ENCODE measurements at regions of chr16 and their contacts with region 1.

Region 1: DNA sequence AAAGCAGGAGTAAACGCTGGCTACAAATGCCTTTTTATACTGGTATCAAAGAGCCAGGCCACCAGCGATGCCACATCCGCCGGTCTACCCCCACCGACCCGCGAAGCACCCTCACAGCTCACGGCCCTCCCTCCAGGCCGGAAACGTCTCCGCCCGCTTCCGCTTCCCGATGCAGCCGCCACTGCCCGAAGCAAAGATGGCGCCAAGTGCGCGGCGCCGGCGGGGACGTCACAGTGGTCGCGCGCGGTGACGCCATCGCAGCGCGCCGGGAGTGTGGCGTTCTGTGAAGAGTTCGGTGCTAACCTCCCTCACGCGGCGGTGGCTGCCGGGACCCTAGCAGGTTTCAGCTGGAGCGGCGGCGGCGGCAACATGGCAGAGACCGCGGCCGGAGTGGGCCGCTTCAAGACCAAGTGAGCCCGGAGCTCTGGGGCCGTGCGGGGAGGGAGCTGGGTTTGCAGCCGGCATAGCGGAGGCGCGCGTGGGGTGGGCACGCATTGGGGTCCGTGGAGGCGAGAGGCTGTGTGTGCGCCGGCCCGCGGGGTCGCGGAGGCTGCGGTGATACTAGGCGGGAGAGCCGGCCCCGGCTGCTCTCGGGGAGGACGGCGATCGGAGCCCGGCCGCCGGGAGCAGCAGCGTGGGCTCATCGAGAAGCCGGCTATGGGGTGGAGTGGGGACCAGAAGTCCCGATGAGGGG is at the start of gene TBL3:
- DNase-seq: peak; percentile 82 to 99
- H3K4me3 ChIP-seq: peak within 1 kb of the TSS; percentile 83 to 93 (median 89)
- H3K27ac ChIP-seq: peak within 1 kb of the TSS; percentile 44; the same call in 1 of the 2 replicates
- H3K4me1 ChIP-seq: peaks cover 0 to 6% (median 5%) of the 10 kb centered on the region in 4 experiments; a peak in 5 of 7 replicates
- H3K27me3 ChIP-seq: no peaks in the 10 kb centered on the region
- CTCF ChIP-seq: 0 out of 4 replicates have a peak, but pooled peaks of 1 of the 3 experiments have one; percentile 14
- EP300 ChIP-seq: peak in 1 of 2 experiments; percentile 38; a peak in 1 of 3 replicates
- POLR2A ChIP-seq: peak in 1 of 2 experiments; percentile 54; a peak in 1 of 3 replicates
- RAD21 ChIP-seq: no peak; a peak in 1 of 4 replicates
- total RNA-seq, gene TBL3: 65.8 and 66.8 TPM in 2 replicates

Region 2: GRCh38 chr16:1959269-1960049 is 12.5 kb before region 1 on chr16 and contains the start of gene NDUFB10:
- CTCF ChIA-PET with region 1: interaction called, 8 read pairs
- POLR2A ChIA-PET with region 1: interaction called, 736 read pairs
- DNase-seq: peak; percentile 76 to 96
- H3K4me3 ChIP-seq: peak within 1 kb of the TSS; percentile 78 to 93 (median 86)
- H3K27ac ChIP-seq: peak within 1 kb of the TSS; percentile 55
- H3K4me1 ChIP-seq: peaks cover 0 to 16% (median under 1%) of the 10 kb centered on the region in 4 experiments; a peak in 4 of 7 replicates
- H3K27me3 ChIP-seq: peaks cover 0 to 2% (median 0%) of the 10 kb centered on the region in 4 experiments; a peak in 3 of 7 replicates
- CTCF ChIP-seq: peak in 1 of 3 experiments; percentile 35; a peak in 1 of 4 replicates
- EP300 ChIP-seq: no peak
- POLR2A ChIP-seq: peak in 1 of 2 experiments; percentile 91; a peak in 2 of 3 replicates
- RAD21 ChIP-seq: no peak
- total RNA-seq, gene NDUFB10: 183 and 197 TPM in 2 replicates

Region 3: DNA sequence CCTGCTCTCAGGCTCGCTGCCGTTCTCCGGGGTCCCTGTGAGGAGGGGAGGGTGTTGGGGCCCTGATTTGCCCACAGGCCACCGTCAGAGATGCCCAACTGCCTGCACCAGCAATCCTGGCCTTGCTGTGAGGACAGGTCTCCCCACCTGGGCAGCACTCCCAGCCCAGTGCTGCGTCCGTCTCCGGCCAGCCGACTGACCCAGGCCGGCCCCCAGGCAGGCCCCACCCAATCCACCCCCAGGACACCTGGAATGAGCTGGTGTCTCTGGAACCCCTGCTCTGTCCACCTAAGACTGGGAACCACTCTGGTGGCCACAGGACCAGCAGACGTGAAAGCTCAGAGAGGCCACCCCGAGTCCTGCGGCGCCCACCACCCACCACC is 143.6 kb after region 1 on chr16:
- CTCF ChIA-PET with region 1: no interaction called
- POLR2A ChIA-PET with region 1: no interaction called
- DNase-seq: no peak
- H3K4me3 ChIP-seq: no peak overlapping the region
- H3K27ac ChIP-seq: no peak overlapping the region
- H3K4me1 ChIP-seq: no peaks in the 10 kb centered on the region
- H3K27me3 ChIP-seq: no peaks in the 10 kb centered on the region
- CTCF ChIP-seq: no peak
- EP300 ChIP-seq: no peak
- POLR2A ChIP-seq: no peak
- RAD21 ChIP-seq: no peak

Measured in H1 (cell line).